GM18951 (cell line): ENCODE measurements at regions of chr3 and their contacts with region 1.

Region 1: GRCh38 chr3:192566706-192567290 is 160.5 kb downstream of the FGF12 start:
- POLR2A ChIP-seq: no peak

Region 2: GRCh38 chr3:192372616-192373015 is 194.2 kb before region 1 on chr3:
- in situ Hi-C with region 1: no loop called
- POLR2A ChIP-seq: no peak

Region 3: DNA sequence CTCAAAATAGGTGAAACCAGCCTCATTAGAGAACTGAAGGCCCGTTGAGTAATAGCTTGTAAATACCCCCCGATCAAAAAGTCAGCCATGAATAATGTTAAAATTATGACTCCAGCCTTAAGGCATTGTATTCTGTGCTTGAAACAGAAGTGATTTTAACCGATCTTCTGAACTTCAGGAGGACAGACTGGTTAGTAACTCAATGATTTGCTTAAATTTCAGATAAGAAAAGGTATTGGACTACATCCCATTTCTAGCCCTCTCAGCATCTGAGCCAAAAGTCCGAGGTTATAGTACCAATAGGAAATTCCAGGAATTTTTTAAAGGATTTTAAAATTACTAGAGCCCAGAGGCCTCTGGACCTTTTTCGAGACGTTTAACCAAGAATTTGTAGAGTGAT is 228.2 kb after region 1 on chr3:
- in situ Hi-C with region 1: loop called (anchors 25 kb)
- POLR2A ChIP-seq: no peak

Region 4: GRCh38 chr3:193052354-193053045 is 485.7 kb after region 1 on chr3:
- in situ Hi-C with region 1: loop called (anchors 25 kb)
- POLR2A ChIP-seq: no peak